B cell (primary cell): ENCODE measurements at regions of chr4 and their contacts with region 1.

Region 1: GRCh38 chr4:70601422-70602039 is 9.5 kb downstream of the AMBN start:
- DNase-seq: peak; percentile 78
- ATAC-seq: peak; percentile 77
- H3K4me3 ChIP-seq: no peak overlapping the region
- H3K4me3 Mint-ChIP-seq: no peak overlapping the region
- H3K27ac ChIP-seq: no peak overlapping the region
- H3K27ac Mint-ChIP-seq: no peak overlapping the region
- H3K4me1 ChIP-seq: peaks cover 0 to 3% of the 10 kb centered on the region in 2 donors
- H3K4me1 Mint-ChIP-seq: no peaks in the 10 kb centered on the region
- H3K27me3 ChIP-seq: no peaks in the 10 kb centered on the region
- H3K27me3 Mint-ChIP-seq: no peaks in the 10 kb centered on the region
- CTCF ChIP-seq: peak; percentile 90

Region 2: GRCh38 chr4:72302981-72303704 is 1701.6 kb after region 1 on chr4:
- CTCF ChIA-PET with region 1: interaction called, 31 read pairs
- POLR2A ChIA-PET with region 1: no interaction called
- intact Hi-C with region 1: no loop called
- DNase-seq: peak; percentile 53
- ATAC-seq: peak; percentile 43
- H3K4me3 ChIP-seq: no peak overlapping the region
- H3K4me3 Mint-ChIP-seq: no peak overlapping the region
- H3K27ac ChIP-seq: no peak overlapping the region
- H3K27ac Mint-ChIP-seq: no peak overlapping the region
- H3K4me1 ChIP-seq: no peaks in the 10 kb centered on the region
- H3K4me1 Mint-ChIP-seq: no peaks in the 10 kb centered on the region
- H3K27me3 ChIP-seq: no peaks in the 10 kb centered on the region
- H3K27me3 Mint-ChIP-seq: no peaks in the 10 kb centered on the region
- CTCF ChIP-seq: peak; percentile 88

Region 3: DNA sequence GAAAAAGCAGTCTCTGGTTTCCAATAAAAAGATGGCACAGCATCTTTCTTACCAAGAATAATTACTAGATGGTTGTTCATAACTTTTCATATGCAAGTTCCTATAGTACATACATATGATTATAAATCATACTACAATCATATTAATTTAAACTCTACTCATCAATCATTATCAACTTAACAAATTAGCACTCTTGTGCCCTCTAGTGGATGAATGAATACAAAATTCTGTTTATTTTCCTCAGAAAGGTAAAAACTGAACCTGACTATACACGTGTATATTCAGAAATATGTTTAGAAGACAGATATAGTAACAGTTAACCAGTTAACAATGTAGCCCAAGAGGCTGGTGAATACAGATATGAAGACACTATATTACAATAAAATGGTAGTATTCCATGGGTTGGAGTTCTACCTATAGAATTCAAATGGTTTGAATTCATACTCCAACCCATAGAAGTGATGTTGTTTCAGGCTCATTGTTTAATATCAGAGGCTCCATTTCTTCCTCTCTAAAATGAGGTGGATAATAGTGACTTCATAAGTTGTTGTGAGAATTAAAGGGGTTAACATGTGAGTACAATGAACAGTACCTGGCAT is 1867.5 kb after region 1 on chr4:
- CTCF ChIA-PET with region 1: no interaction called
- POLR2A ChIA-PET with region 1: no interaction called
- intact Hi-C with region 1: loop called (anchors 5 kb)
- DNase-seq: no peak
- ATAC-seq: no peak
- H3K4me3 ChIP-seq: no peak overlapping the region
- H3K4me3 Mint-ChIP-seq: no peak overlapping the region
- H3K27ac ChIP-seq: no peak overlapping the region
- H3K27ac Mint-ChIP-seq: no peak overlapping the region
- H3K4me1 ChIP-seq: no peaks in the 10 kb centered on the region
- H3K4me1 Mint-ChIP-seq: no peaks in the 10 kb centered on the region
- H3K27me3 ChIP-seq: no peaks in the 10 kb centered on the region
- H3K27me3 Mint-ChIP-seq: no peaks in the 10 kb centered on the region
- CTCF ChIP-seq: peak; percentile 62